Natural killer cell (primary cell): ENCODE measurements at regions of chr1 and their contacts with region 1.

Region 1: GRCh38 chr1:13730751-13731482 is 30.9 kb downstream of the PRDM2 start:
- DNase-seq: peak; percentile 58 to 96
- ATAC-seq: peak; percentile 84 to 91 (median 91)
- H3K4me3 ChIP-seq: peak overlapping the region; percentile 10
- H3K4me3 Mint-ChIP-seq: peak overlapping the region; percentile 79
- H3K27ac ChIP-seq: peak overlapping the region; percentile 87
- H3K27ac Mint-ChIP-seq: peak overlapping the region; percentile 82 to 96
- H3K4me1 ChIP-seq: peaks cover 34% of the 10 kb centered on the region
- H3K4me1 Mint-ChIP-seq: peaks cover 61 to 63% of the 10 kb centered on the region in 2 donors
- H3K27me3 ChIP-seq: no peaks in the 10 kb centered on the region
- H3K27me3 Mint-ChIP-seq: no peaks in the 10 kb centered on the region
- CTCF ChIP-seq: no peak

Region 2: DNA sequence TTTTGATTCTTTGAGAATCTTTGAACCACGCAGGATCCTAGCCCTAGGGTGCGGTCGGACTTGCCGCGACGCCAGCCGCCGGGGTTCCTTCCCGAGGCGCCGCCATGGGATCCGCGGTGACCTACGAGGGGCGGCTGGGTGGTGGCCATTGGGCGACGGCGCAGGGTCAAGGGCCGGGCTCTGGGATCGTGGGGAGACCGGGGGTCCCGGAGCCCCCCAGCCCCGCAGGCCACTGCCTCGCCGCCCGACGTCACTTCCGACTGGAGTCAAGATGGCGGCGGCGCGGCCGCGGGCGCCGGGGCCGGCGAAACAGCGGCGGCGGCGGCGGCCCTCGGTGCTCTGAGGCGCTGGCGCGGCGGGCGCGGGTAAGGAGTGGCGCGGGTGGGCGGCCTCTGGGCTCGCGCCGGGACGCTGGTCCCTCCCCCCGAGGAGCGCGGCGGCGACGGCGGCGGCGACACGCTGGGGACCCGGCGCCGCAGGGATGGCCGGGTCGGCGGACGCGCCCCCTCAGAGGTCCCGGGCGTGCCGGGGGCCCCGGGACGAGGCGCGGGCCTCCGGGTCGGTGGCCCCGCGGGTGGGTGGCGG is 30.9 kb before region 1 on chr1 and contains the start of gene PRDM2:
- intact Hi-C with region 1: loop called (anchors 2 kb)
- DNase-seq: peak; percentile 66 to 83
- ATAC-seq: peak; percentile 57 to 72 (median 71)
- H3K4me3 ChIP-seq: peak within 1 kb of the TSS; percentile 71
- H3K4me3 Mint-ChIP-seq: peak within 1 kb of the TSS; percentile 94
- H3K27ac ChIP-seq: peak within 1 kb of the TSS; percentile 97
- H3K27ac Mint-ChIP-seq: peak within 1 kb of the TSS; percentile 85 to 96
- H3K4me1 ChIP-seq: peaks cover 18% of the 10 kb centered on the region
- H3K4me1 Mint-ChIP-seq: peaks cover 31 to 34% of the 10 kb centered on the region in 2 donors
- H3K27me3 ChIP-seq: no peaks in the 10 kb centered on the region
- H3K27me3 Mint-ChIP-seq: peaks cover 0 to 4% of the 10 kb centered on the region in 2 donors
- CTCF ChIP-seq: no peak
- total RNA-seq, gene PRDM2: 168 to 193 (median 184) TPM

Region 3: DNA sequence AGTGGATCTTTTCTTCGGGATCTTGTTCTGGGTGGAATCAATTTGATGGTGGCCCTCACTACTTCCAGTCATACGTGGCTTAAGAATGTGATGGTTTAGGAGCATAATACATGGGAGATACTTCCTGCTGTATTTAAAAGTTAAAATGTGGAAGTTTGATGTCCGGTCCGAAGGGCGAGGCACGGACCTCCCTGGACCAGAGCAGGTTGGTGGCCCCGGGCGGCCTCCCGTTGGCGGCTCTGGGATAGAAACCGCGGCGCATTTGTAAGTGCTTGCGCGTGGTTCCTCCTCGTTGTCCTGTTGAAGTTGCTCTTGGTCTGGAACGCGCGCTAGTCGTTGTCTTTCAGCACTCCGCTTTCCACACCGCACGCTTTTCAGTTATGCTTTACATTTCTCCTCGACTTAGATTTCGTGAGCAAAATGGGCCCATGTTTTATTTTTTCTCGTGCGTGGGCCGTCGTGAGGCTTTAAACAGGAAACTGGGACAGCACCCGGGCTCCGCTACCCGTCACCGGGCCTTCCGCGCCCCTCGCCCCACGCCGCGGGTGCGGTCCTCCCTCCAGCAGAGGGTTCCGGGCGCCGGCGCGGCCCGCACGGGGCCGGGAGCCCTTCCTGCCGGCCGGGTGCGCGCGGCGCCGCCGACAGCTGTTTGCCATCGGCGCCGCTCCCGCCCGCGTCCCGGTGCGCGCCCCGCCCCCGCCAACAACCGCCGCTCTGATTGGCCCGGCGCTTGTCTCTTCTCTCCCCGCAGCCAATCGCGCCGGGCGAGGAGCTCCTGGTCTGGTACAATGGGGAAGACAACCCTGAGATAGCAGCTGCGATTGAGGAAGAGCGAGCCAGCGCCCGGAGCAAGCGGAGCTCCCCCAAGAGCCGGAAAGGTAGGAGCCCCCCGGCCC is 17.9 kb after region 1 on chr1:
- intact Hi-C with region 1: loop called (anchors 1 kb)
- DNase-seq: peak; percentile 96 to 98
- ATAC-seq: peak; percentile 84 to 95 (median 87)
- H3K4me3 ChIP-seq: peak overlapping the region; percentile 76
- H3K4me3 Mint-ChIP-seq: peak overlapping the region; percentile 91
- H3K27ac ChIP-seq: peak overlapping the region; percentile 92
- H3K27ac Mint-ChIP-seq: peak overlapping the region; percentile 92
- H3K4me1 ChIP-seq: peaks cover 17% of the 10 kb centered on the region
- H3K4me1 Mint-ChIP-seq: peaks cover 48 to 57% of the 10 kb centered on the region in 2 donors
- H3K27me3 ChIP-seq: no peaks in the 10 kb centered on the region
- H3K27me3 Mint-ChIP-seq: no peaks in the 10 kb centered on the region
- CTCF ChIP-seq: no peak

Region 4: GRCh38 chr1:13764588-13765332 is 33.8 kb after region 1 on chr1:
- intact Hi-C with region 1: loop called (anchors 5 kb)
- DNase-seq: peak; percentile 29 to 58
- ATAC-seq: peak; percentile 74 to 93 (median 82)
- H3K4me3 ChIP-seq: no peak overlapping the region
- H3K4me3 Mint-ChIP-seq: peak overlapping the region; percentile 47
- H3K27ac ChIP-seq: no peak overlapping the region
- H3K27ac Mint-ChIP-seq: peak overlapping the region; percentile 66 to 69
- H3K4me1 ChIP-seq: peaks cover 37% of the 10 kb centered on the region
- H3K4me1 Mint-ChIP-seq: peaks cover 75 to 79% of the 10 kb centered on the region in 2 donors
- H3K27me3 ChIP-seq: no peaks in the 10 kb centered on the region
- H3K27me3 Mint-ChIP-seq: no peaks in the 10 kb centered on the region
- CTCF ChIP-seq: no peak

Region 5: DNA sequence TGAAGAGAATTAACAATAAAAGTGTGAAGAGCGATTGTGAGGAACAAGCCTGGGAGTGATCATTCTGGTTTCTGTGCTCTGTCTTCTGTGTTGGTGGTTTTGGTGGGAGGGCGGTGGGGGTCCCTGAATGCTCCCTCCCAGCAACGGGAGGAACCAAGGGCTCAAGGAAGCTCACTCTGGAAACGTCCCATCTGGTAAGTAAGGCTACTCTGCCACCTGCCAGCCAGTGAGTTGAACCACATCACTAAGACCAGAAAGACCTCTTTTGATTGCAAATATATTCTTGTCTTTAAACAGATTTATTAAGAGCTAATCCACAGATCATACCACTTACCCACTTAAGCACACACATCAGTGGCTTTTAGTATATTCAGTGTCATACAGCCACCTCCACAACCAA is 94.1 kb after region 1 on chr1:
- intact Hi-C with region 1: no loop called
- DNase-seq: no peak
- ATAC-seq: no peak
- H3K4me3 ChIP-seq: no peak overlapping the region
- H3K4me3 Mint-ChIP-seq: no peak overlapping the region
- H3K27ac ChIP-seq: no peak overlapping the region
- H3K27ac Mint-ChIP-seq: no peak overlapping the region
- H3K4me1 ChIP-seq: peaks cover 8% of the 10 kb centered on the region
- H3K4me1 Mint-ChIP-seq: peaks cover 0 to 10% of the 10 kb centered on the region in 2 donors
- H3K27me3 ChIP-seq: no peaks in the 10 kb centered on the region
- H3K27me3 Mint-ChIP-seq: no peaks in the 10 kb centered on the region
- CTCF ChIP-seq: no peak

Region 6: DNA sequence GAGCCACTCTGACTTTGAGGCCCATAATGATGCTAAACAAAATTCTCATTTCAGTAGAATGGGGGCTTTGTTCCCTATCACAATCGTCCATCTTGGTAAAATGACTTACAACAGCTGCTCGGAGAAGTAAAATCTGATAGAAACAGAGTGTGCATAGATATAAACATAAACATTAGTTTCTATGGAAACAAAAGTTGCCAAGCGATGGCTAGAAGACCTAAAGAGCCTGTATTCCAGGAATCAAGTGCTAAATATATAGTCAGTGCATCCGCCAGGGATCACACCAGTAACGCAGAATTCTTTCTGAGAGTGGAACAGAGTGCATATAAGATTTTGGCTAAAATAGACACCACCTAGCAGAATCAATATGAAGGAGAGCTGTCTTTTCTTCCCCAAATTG is 776.3 kb after region 1 on chr1:
- intact Hi-C with region 1: no loop called
- DNase-seq: no peak
- ATAC-seq: no peak
- H3K4me3 ChIP-seq: no peak overlapping the region
- H3K4me3 Mint-ChIP-seq: no peak overlapping the region
- H3K27ac ChIP-seq: no peak overlapping the region
- H3K27ac Mint-ChIP-seq: no peak overlapping the region
- H3K4me1 ChIP-seq: no peaks in the 10 kb centered on the region
- H3K4me1 Mint-ChIP-seq: no peaks in the 10 kb centered on the region
- H3K27me3 ChIP-seq: no peaks in the 10 kb centered on the region
- H3K27me3 Mint-ChIP-seq: peaks cover 0 to 9% of the 10 kb centered on the region in 2 donors
- CTCF ChIP-seq: no peak